ENCODE measurements at regions of chr3 and their contacts with region 1.

Region 1: GRCh38 chr3:150603153-150603979 is at the start of gene SELENOT:
- DNase-seq: peak; percentile 83 to 96 (median 90)
- H3K4me3 ChIP-seq: peak within 1 kb of the TSS; percentile 61 to 98 (median 84)
- H3K27ac ChIP-seq: peak within 1 kb of the TSS; percentile 82 to 99 (median 96)
- H3K27me3 ChIP-seq: no peaks in the 10 kb centered on the region
- CTCF ChIP-seq: peak in 39 of 56 donors; percentile 2 to 65 (median 35)
- total RNA-seq, gene SELENOT: 78.5 to 150 (median 109) TPM

Region 2: GRCh38 chr3:150681057-150681456 is 77.7 kb after region 1 on chr3:
- intact Hi-C with region 1: no loop called
- DNase-seq: no peak
- H3K4me3 ChIP-seq: no peak overlapping the region
- H3K27ac ChIP-seq: no peak overlapping the region
- H3K27me3 ChIP-seq: no peaks in the 10 kb centered on the region
- CTCF ChIP-seq: no peak

Region 3: GRCh38 chr3:150703299-150704134 is 100.2 kb after region 1 on chr3 and contains the start of gene ERICH6:
- intact Hi-C with region 1: loop called (anchors 2 to 5 kb)
- DNase-seq: peak; percentile 67 to 92 (median 88)
- H3K4me3 ChIP-seq: peak within 1 kb of the TSS; percentile 44 to 87 (median 73)
- H3K27ac ChIP-seq: peak within 1 kb of the TSS in 51 of 59 donors; percentile 17 to 89 (median 72)
- H3K27me3 ChIP-seq: no peaks in the 10 kb centered on the region
- CTCF ChIP-seq: peak in 17 of 56 donors; percentile 12 to 39 (median 21)
- total RNA-seq, gene ERICH6: 0.23 to 2.5 (median 0.63) TPM in 81 of 120 experiments, not detected in the others

Region 4: GRCh38 chr3:151468284-151468917 is 865.0 kb after region 1 on chr3:
- intact Hi-C with region 1: no loop called
- DNase-seq: no peak
- H3K4me3 ChIP-seq: no peak overlapping the region
- H3K27ac ChIP-seq: no peak overlapping the region
- H3K27me3 ChIP-seq: no peaks in the 10 kb centered on the region
- CTCF ChIP-seq: peak; percentile 47 to 80 (median 71)

Measured in dorsolateral prefrontal cortex (tissue), 120 donors.